ENCODE measurements at regions of chr2 and their contacts with region 1.

Region 1: DNA sequence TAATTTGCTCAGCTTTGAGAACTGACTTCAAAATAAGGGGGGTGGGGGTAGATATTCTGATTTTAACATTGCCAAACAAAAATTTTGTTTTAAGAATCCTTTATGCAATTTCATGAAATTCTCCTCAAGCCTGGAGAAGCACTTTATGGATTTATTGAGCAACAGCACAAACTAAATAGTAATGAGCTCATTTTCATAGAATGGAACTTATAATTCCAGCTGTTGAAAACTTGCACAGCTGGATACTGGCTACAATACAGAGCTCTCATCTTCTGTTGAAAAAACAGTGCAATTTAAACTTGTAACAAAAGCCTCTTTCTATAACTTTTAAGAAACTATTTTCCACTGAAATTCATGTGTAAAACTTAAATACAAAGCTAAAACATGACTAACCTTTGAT is 137.6 kb upstream of the FN1 start:
- DNase-seq: no peak
- ATAC-seq: no peak
- H3K4me3 ChIP-seq: no peak overlapping the region
- H3K4me3 Mint-ChIP-seq: no peak overlapping the region
- H3K27ac ChIP-seq: no peak overlapping the region
- H3K27ac Mint-ChIP-seq: no peak overlapping the region
- H3K4me1 ChIP-seq: no peaks in the 10 kb centered on the region
- H3K4me1 Mint-ChIP-seq: no peaks in the 10 kb centered on the region
- H3K27me3 ChIP-seq: no peaks in the 10 kb centered on the region
- H3K27me3 Mint-ChIP-seq: peaks cover 0 to 4% of the 10 kb centered on the region in 2 donors

Region 2: GRCh38 chr2:213818436-213818835 is 1755.1 kb before region 1 on chr2:
- CTCF ChIA-PET with region 1: interaction called in 1 of 2 experiments, 10 read pairs
- POLR2A ChIA-PET with region 1: no interaction called
- DNase-seq: no peak
- ATAC-seq: no peak
- H3K4me3 ChIP-seq: no peak overlapping the region
- H3K4me3 Mint-ChIP-seq: no peak overlapping the region
- H3K27ac ChIP-seq: no peak overlapping the region
- H3K27ac Mint-ChIP-seq: no peak overlapping the region
- H3K4me1 ChIP-seq: no peaks in the 10 kb centered on the region
- H3K4me1 Mint-ChIP-seq: no peaks in the 10 kb centered on the region
- H3K27me3 ChIP-seq: no peaks in the 10 kb centered on the region
- H3K27me3 Mint-ChIP-seq: no peaks in the 10 kb centered on the region